CD4-positive, alpha-beta memory T cell (primary cell): ENCODE measurements at regions of chr12 and their contacts with region 1.

Region 1: DNA sequence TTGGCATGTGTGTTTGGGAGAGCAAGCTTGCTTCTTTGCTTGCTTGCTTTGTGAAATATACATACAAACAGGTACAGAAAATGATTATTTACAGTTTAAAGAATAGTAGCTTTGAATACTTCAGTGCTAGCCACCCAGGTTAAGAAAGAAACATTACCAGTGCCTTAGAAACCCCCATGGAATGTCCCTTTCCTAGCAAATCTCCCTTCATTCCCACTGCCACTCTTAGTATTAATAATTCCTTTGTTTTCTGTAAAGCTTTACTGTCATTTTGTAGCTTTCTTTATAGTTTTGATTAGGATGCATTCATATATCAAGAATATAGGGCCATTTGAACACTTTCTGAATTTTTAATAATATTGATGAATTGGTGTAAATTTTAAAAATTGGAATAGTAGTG is 9.5 kb downstream of the SRGAP1 start:
- DNase-seq: no peak
- H3K4me3 ChIP-seq: no peak overlapping the region
- H3K4me3 Mint-ChIP-seq: no peak overlapping the region
- H3K27ac ChIP-seq: no peak overlapping the region
- H3K27ac Mint-ChIP-seq: no peak overlapping the region
- H3K4me1 ChIP-seq: no peaks in the 10 kb centered on the region
- H3K4me1 Mint-ChIP-seq: no peaks in the 10 kb centered on the region
- H3K27me3 ChIP-seq: no peaks in the 10 kb centered on the region
- H3K27me3 Mint-ChIP-seq: peaks cover 2 to 7% of the 10 kb centered on the region in 2 donors

Region 2: GRCh38 chr12:63496654-63497053 is 357.3 kb before region 1 on chr12:
- CTCF ChIA-PET with region 1: no interaction called
- POLR2A ChIA-PET with region 1: no interaction called
- intact Hi-C with region 1: no loop called
- DNase-seq: no peak
- H3K4me3 ChIP-seq: no peak overlapping the region
- H3K4me3 Mint-ChIP-seq: no peak overlapping the region
- H3K27ac ChIP-seq: no peak overlapping the region
- H3K27ac Mint-ChIP-seq: no peak overlapping the region
- H3K4me1 ChIP-seq: no peaks in the 10 kb centered on the region
- H3K4me1 Mint-ChIP-seq: no peaks in the 10 kb centered on the region
- H3K27me3 ChIP-seq: no peaks in the 10 kb centered on the region
- H3K27me3 Mint-ChIP-seq: no peaks in the 10 kb centered on the region

Region 3: DNA sequence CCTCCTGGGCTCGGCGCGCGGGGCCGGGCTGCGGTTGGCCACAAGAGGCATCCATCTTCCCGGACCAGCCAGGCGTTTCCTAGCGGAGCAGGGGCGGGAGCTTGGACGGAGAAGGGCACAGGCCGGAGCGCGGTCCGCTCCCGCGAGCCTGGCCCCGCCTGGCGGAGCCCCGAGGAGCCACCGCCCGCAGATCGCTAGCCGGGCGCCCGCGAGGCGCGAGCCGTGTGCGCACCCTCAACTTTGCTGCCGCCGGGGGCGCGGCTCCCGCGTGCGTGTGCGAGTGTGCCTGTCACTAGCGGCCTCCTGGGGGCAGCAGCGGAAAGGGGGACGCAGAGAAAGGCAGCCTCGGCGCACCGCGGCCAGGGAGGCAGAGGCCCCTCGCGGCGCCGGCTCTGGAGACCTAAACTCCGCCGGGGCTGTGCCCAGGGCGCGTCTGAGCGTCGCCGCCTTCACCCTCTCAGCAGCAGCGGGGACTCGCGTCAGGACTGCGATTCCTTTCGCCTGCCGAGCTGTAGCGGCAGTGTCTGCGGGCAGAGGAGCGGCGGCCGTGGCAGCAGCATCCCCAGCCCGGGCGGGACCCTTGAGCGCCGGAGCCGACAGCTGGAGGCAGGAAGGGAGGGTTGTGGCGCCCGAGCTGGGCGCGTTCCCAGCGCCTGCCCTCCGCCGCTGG is 10.1 kb before region 1 on chr12:
- CTCF ChIA-PET with region 1: interaction called, 10 read pairs
- POLR2A ChIA-PET with region 1: interaction called, 3 read pairs
- intact Hi-C with region 1: no loop called
- DNase-seq: peak; percentile 61 to 76 (median 73)
- H3K4me3 ChIP-seq: peak overlapping the region; percentile 49 to 66
- H3K4me3 Mint-ChIP-seq: peak overlapping the region in 7 of 8 donors; percentile 35 to 81 (median 67)
- H3K27ac ChIP-seq: no peak overlapping the region
- H3K27ac Mint-ChIP-seq: no peak overlapping the region
- H3K4me1 ChIP-seq: peaks cover 15% of the 10 kb centered on the region
- H3K4me1 Mint-ChIP-seq: peaks cover 7 to 13% (median 10%) of the 10 kb centered on the region in 4 donors
- H3K27me3 ChIP-seq: no peaks in the 10 kb centered on the region
- H3K27me3 Mint-ChIP-seq: peaks cover 14 to 26% of the 10 kb centered on the region in 2 donors

Region 4: DNA sequence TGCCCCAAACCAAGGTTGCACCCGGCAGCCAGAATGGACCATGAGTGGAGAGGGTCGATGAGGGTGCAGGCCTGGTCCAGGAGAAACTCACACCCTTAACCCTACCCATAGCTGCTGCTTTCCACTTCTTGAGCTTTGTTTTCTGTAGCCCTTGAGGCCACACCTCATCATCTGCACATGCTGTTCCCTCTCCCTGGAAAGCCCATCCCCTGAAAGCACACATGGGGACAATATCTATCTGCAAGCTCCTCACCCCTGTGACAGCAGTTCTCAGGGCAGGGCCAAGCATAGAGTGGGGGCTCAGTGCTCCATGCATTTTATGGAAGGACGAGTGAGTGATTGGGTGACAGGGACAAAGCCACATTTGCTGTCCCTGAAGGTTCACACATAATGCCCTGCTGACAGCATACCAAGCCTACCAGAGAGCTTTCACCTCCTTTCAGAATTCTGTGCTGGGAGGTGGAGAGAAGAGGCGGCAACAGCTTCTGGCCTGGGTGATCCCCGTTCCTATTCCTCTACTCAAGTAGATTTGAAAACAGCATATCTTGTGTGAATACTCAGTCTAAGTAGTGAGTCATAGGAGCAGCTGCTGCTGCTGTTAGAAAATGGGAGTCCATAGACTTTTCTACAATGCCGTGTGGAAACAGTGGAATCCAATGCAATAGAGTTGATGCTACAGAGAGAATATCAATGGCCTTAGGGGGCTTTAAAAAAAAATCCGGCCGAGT is 35.1 kb after region 1 on chr12:
- CTCF ChIA-PET with region 1: no interaction called
- POLR2A ChIA-PET with region 1: no interaction called
- intact Hi-C with region 1: no loop called
- DNase-seq: no peak
- H3K4me3 ChIP-seq: no peak overlapping the region
- H3K4me3 Mint-ChIP-seq: no peak overlapping the region
- H3K27ac ChIP-seq: no peak overlapping the region
- H3K27ac Mint-ChIP-seq: no peak overlapping the region
- H3K4me1 ChIP-seq: no peaks in the 10 kb centered on the region
- H3K4me1 Mint-ChIP-seq: no peaks in the 10 kb centered on the region
- H3K27me3 ChIP-seq: no peaks in the 10 kb centered on the region
- H3K27me3 Mint-ChIP-seq: peaks cover 4 to 6% of the 10 kb centered on the region in 2 donors